Tibial artery (tissue), 4 donors: ENCODE measurements at regions of chr4 and their contacts with region 1.

Region 1: DNA sequence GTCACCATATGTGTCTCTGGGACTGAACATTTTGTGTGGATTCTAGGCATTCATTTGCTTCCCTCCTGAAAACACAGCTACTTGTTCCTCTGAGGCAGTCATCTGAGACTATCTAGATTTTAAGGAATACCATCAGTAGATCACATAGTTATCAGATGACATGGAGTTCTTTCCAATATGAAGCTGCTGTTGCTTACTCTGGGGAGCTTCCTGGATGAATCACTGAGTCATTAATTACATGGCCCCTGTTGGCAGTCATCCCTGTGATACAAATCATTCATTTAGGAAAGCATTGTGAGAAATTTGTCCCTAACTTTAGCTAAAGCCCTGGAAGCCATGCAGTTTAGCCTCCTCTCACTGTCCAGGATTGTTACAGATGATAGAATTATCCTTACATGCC is 98.2 kb upstream of the ARSJ start:
- DNase-seq: no peak
- H3K4me3 ChIP-seq: no peak overlapping the region
- H3K27ac ChIP-seq: no peak overlapping the region
- H3K4me1 ChIP-seq: no peaks in the 10 kb centered on the region
- H3K27me3 ChIP-seq: no peaks in the 10 kb centered on the region
- CTCF ChIP-seq: no peak

Region 2: DNA sequence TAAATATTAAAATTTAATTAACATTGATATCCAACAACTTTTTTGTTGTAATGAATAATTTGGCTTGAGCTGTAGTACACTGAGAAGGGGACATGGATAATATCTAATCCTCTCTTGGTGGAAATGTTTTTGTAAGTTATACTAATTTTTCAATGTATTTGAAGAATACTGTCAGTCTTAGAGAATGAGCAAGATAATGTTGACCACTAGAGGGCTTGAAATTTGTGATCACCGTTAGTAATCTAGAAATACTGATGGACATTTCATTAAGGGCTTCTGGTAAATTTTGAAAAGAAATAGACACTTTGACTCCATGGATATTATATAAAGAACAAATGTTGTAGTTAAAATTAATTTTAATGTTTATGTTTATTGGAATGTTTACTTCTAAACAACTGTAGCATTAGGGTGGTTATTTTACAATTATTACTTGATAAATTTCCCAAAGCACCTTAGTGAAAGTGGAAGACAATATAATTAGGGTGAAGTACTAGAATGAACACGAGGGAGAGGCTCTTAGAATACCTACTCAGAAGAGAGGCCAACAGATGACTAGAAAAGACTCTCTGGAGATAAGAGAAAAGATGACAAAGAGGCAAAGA is 296.1 kb before region 1 on chr4:
- intact Hi-C with region 1: loop called (anchors 10 kb)
- DNase-seq: no peak
- H3K4me3 ChIP-seq: no peak overlapping the region
- H3K27ac ChIP-seq: no peak overlapping the region
- H3K4me1 ChIP-seq: peaks cover 0 to 13% (median 7%) of the 10 kb centered on the region in 4 donors
- H3K27me3 ChIP-seq: no peaks in the 10 kb centered on the region
- CTCF ChIP-seq: peak; percentile 57 to 62